Caco-2 (cell line): ENCODE measurements at regions of chr11 and their contacts with region 1.

Region 1: GRCh38 chr11:101974255-101974654 is 57.9 kb upstream of the ANGPTL5 start:
- DNase-seq: peak in 1 of 2 experiments; percentile 65
- H3K4me3 ChIP-seq: no peak overlapping the region
- H3K4me3 Mint-ChIP-seq: peak overlapping the region; percentile 45
- H3K27ac Mint-ChIP-seq: peak overlapping the region; percentile 43
- H3K4me1 ChIP-seq: peaks cover 22% of the 10 kb centered on the region
- H3K4me1 Mint-ChIP-seq: peaks cover 14% of the 10 kb centered on the region
- H3K27me3 ChIP-seq: no peaks in the 10 kb centered on the region
- H3K27me3 Mint-ChIP-seq: no peaks in the 10 kb centered on the region
- CTCF ChIP-seq: peak; percentile 39 to 72

Region 2: GRCh38 chr11:101860696-101861427 is 113.4 kb before region 1 on chr11:
- CTCF ChIA-PET with region 1: interaction called, 54 read pairs
- POLR2A ChIA-PET with region 1: no interaction called
- intact Hi-C with region 1: loop called (anchors 1 kb)
- DNase-seq: peak; percentile 73 to 79
- H3K4me3 ChIP-seq: no peak overlapping the region
- H3K4me3 Mint-ChIP-seq: no peak overlapping the region
- H3K27ac Mint-ChIP-seq: peak overlapping the region; percentile 71
- H3K4me1 ChIP-seq: peaks cover 28% of the 10 kb centered on the region
- H3K4me1 Mint-ChIP-seq: peaks cover 25% of the 10 kb centered on the region
- H3K27me3 ChIP-seq: no peaks in the 10 kb centered on the region
- H3K27me3 Mint-ChIP-seq: no peaks in the 10 kb centered on the region
- CTCF ChIP-seq: peak; percentile 89 to 95

Region 3: GRCh38 chr11:101931692-101932091 is 42.6 kb before region 1 on chr11:
- CTCF ChIA-PET with region 1: interaction called, 19 read pairs
- POLR2A ChIA-PET with region 1: no interaction called
- intact Hi-C with region 1: no loop called
- DNase-seq: no peak
- H3K4me3 ChIP-seq: no peak overlapping the region
- H3K4me3 Mint-ChIP-seq: no peak overlapping the region
- H3K27ac Mint-ChIP-seq: no peak overlapping the region
- H3K4me1 ChIP-seq: no peaks in the 10 kb centered on the region
- H3K4me1 Mint-ChIP-seq: no peaks in the 10 kb centered on the region
- H3K27me3 ChIP-seq: no peaks in the 10 kb centered on the region
- H3K27me3 Mint-ChIP-seq: no peaks in the 10 kb centered on the region
- CTCF ChIP-seq: no peak

Region 4: GRCh38 chr11:101987370-101987769 is 13.1 kb after region 1 on chr11:
- CTCF ChIA-PET with region 1: interaction called, 12 read pairs
- POLR2A ChIA-PET with region 1: no interaction called
- intact Hi-C with region 1: no loop called
- DNase-seq: peak; percentile 64 to 80
- H3K4me3 ChIP-seq: no peak overlapping the region
- H3K4me3 Mint-ChIP-seq: peak overlapping the region; percentile 24
- H3K27ac Mint-ChIP-seq: peak overlapping the region; percentile 54
- H3K4me1 ChIP-seq: peaks cover 24% of the 10 kb centered on the region
- H3K4me1 Mint-ChIP-seq: peaks cover 20% of the 10 kb centered on the region
- H3K27me3 ChIP-seq: no peaks in the 10 kb centered on the region
- H3K27me3 Mint-ChIP-seq: no peaks in the 10 kb centered on the region
- CTCF ChIP-seq: no peak

Region 5: GRCh38 chr11:102085864-102086551 is 111.8 kb after region 1 on chr11:
- CTCF ChIA-PET with region 1: no interaction called
- POLR2A ChIA-PET with region 1: no interaction called
- intact Hi-C with region 1: no loop called
- DNase-seq: peak in 1 of 2 experiments; percentile 19
- H3K4me3 ChIP-seq: no peak overlapping the region
- H3K4me3 Mint-ChIP-seq: no peak overlapping the region
- H3K27ac Mint-ChIP-seq: no peak overlapping the region
- H3K4me1 ChIP-seq: no peaks in the 10 kb centered on the region
- H3K4me1 Mint-ChIP-seq: peaks cover 8% of the 10 kb centered on the region
- H3K27me3 ChIP-seq: no peaks in the 10 kb centered on the region
- H3K27me3 Mint-ChIP-seq: no peaks in the 10 kb centered on the region
- CTCF ChIP-seq: no peak